Heart left ventricle (tissue), 16 donors: ENCODE measurements at regions of chr1 and their contacts with region 1.

Region 1: DNA sequence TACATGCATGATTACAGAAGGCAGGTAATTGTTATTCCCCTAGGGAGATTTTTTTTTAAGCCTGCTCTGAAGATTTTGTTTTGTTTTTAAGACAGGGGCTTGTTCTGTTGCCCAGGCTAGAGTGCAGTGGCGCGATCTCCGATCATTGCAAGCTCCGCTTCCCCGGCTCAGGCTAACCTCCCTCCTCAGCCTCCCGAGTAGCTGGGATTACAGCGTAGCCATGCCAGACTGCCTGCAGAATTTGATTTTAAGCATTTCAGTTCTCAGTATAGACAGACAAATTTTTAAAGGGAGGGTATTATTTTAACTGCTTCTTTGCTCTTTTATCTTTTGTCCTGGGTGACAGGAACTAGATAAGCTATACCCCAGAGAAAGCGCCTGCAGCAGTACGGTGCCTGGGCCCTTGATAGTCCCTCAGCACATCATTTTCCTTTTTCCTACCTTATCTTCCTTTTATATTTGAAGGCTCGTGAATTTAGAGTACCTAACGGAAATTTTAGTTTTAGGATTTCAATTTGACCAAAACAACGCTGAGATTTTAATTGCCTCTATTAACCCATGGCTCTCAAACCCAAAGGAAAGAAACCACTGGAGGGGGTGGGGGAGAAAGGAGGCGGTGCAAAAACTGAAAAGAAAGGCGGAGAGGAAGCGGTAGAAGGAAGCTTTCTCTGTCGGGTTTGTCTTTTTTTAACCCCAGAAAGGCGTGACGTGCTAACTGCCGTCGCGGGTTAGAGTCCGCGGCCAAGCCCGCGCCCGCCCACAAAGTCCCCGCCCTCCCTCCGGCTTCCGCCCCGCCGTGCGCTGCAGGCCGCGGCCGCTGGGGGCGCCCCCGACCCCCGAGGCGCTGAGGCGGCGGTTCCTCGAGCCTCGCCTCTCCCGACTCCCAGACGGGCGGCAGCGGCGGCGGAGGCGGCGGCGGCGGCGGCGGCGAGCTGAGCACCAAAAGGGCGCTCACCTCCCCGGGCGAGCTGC is at the start of gene EEIG2:
- DNase-seq: peak; percentile 86 to 94 (median 87)
- ATAC-seq: peak; percentile 80 to 96 (median 94)
- H3K4me3 ChIP-seq: peak within 1 kb of the TSS; percentile 58 to 85 (median 75)
- H3K27ac ChIP-seq: peak within 1 kb of the TSS in 11 of 12 donors; percentile 30 to 82 (median 67)
- H3K4me1 ChIP-seq: peaks cover 0 to 60% (median 15%) of the 10 kb centered on the region in 12 donors
- H3K27me3 ChIP-seq: no peaks in the 10 kb centered on the region
- CTCF ChIP-seq: peak; percentile 56 to 95 (median 84)
- POLR2A ChIP-seq: peak in 1 of 2 donors; percentile 53
- total RNA-seq, gene EEIG2: 3.4 to 14.1 (median 6.0) TPM

Region 2: GRCh38 chr1:108512239-108512981 is 47.1 kb before region 1 on chr1:
- intact Hi-C with region 1: loop called in 6 of 10 experiments (anchors 2 to 10 kb)
- DNase-seq: no peak
- ATAC-seq: peak in 1 of 4 donors; percentile 47
- H3K4me3 ChIP-seq: no peak overlapping the region
- H3K27ac ChIP-seq: no peak overlapping the region
- H3K4me1 ChIP-seq: no peaks in the 10 kb centered on the region
- H3K27me3 ChIP-seq: peaks cover 0 to 3% (median 0%) of the 10 kb centered on the region in 9 donors
- CTCF ChIP-seq: peak; percentile 75 to 95 (median 91)
- POLR2A ChIP-seq: no peak

Region 3: GRCh38 chr1:108590957-108591356 is 31.5 kb after region 1 on chr1:
- intact Hi-C with region 1: loop called in 4 of 10 experiments (anchors 2 to 5 kb)
- DNase-seq: peak in 1 of 5 donors; percentile 27
- ATAC-seq: peak; percentile 57 to 84 (median 79)
- H3K4me3 ChIP-seq: peak overlapping the region in 3 of 12 donors; percentile 1 to 27 (median 9)
- H3K27ac ChIP-seq: peak overlapping the region; percentile 10 to 88 (median 62)
- H3K4me1 ChIP-seq: peaks cover 0 to 51% (median 25%) of the 10 kb centered on the region in 12 donors
- H3K27me3 ChIP-seq: no peaks in the 10 kb centered on the region
- CTCF ChIP-seq: no peak
- POLR2A ChIP-seq: no peak

Region 4: GRCh38 chr1:108609483-108610049 is 50.1 kb after region 1 on chr1:
- intact Hi-C with region 1: loop called in 5 of 10 experiments (anchors 5 to 10 kb)
- DNase-seq: peak in 2 of 5 donors; percentile 28 to 37
- ATAC-seq: peak; percentile 63 to 73 (median 68)
- H3K4me3 ChIP-seq: no peak overlapping the region
- H3K27ac ChIP-seq: peak overlapping the region in 9 of 12 donors; percentile 0 to 72 (median 32)
- H3K4me1 ChIP-seq: peaks cover 0 to 29% (median 18%) of the 10 kb centered on the region in 12 donors
- H3K27me3 ChIP-seq: no peaks in the 10 kb centered on the region
- CTCF ChIP-seq: peak in 1 of 12 donors; percentile 18
- POLR2A ChIP-seq: no peak

Region 5: GRCh38 chr1:108643492-108644335 is 84.2 kb after region 1 on chr1:
- intact Hi-C with region 1: loop called in 7 of 10 experiments (anchors 1 to 5 kb)
- DNase-seq: peak in 2 of 5 donors; percentile 38 to 40
- ATAC-seq: peak; percentile 53 to 72 (median 61)
- H3K4me3 ChIP-seq: no peak overlapping the region
- H3K27ac ChIP-seq: peak overlapping the region in 1 of 12 donors; percentile 96
- H3K4me1 ChIP-seq: peaks cover 0 to 48% (median 0%) of the 10 kb centered on the region in 12 donors
- H3K27me3 ChIP-seq: no peaks in the 10 kb centered on the region
- CTCF ChIP-seq: peak; percentile 52 to 82 (median 72)
- POLR2A ChIP-seq: no peak